ENCODE measurements at regions of chr2 and their contacts with region 1.

Region 1: DNA sequence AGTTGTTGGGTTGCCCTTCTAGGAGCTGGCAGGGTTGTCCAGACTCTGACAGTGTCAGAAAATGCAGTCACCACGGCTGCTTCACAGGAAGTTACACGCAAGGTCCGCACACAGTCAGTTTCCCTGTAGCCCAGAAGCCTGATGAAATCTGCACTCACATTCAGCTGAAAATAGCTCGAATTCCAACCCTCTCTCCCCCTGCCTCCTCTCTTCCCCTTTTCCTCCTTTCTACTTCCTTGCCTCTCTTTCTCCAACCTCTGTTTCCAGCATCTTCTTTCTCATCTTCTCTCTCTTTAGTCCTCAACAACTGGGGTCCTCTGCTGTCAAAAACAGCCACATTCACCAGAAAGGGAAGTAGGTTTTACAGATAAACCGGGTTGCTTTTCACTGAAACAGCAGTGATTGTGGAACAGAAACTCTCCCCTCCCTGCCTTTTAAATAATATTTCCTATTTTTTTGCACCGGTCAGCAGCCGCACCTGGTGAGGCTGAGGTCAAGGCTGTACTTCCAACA is 69.3 kb downstream of the BCL11A start:
- DNase-seq: peak; percentile 85 to 92 (median 89)
- H3K4me3 ChIP-seq: peak overlapping the region; percentile 28 to 57 (median 46)
- H3K4me3 Mint-ChIP-seq: peak overlapping the region; percentile 63 to 98
- H3K27ac ChIP-seq: peak overlapping the region; percentile 82 to 94
- H3K27ac Mint-ChIP-seq: peak overlapping the region; percentile 95 to 99 (median 97)
- H3K4me1 ChIP-seq: peaks cover 59 to 65% of the 10 kb centered on the region in 2 donors
- H3K4me1 Mint-ChIP-seq: peaks cover 83% of the 10 kb centered on the region
- H3K27me3 ChIP-seq: no peaks in the 10 kb centered on the region
- H3K27me3 Mint-ChIP-seq: no peaks in the 10 kb centered on the region
- CTCF ChIP-seq: no peak

Region 2: GRCh38 chr2:60515721-60516226 is 31.6 kb after region 1 on chr2:
- intact Hi-C with region 1: loop called in 1 of 2 experiments (anchors 1 kb)
- DNase-seq: peak; percentile 92 to 99 (median 97)
- H3K4me3 ChIP-seq: peak overlapping the region; percentile 1 to 65 (median 49)
- H3K4me3 Mint-ChIP-seq: peak overlapping the region; percentile 78 to 83
- H3K27ac ChIP-seq: peak overlapping the region; percentile 87 to 97
- H3K27ac Mint-ChIP-seq: peak overlapping the region; percentile 94 to 100 (median 99)
- H3K4me1 ChIP-seq: peaks cover 51 to 52% of the 10 kb centered on the region in 2 donors
- H3K4me1 Mint-ChIP-seq: peaks cover 56% of the 10 kb centered on the region
- H3K27me3 ChIP-seq: no peaks in the 10 kb centered on the region
- H3K27me3 Mint-ChIP-seq: no peaks in the 10 kb centered on the region
- CTCF ChIP-seq: peak; percentile 15